ENCODE measurements at regions of chr17 and their contacts with region 1.

Region 1: GRCh38 chr17:13562271-13562800 is 39.4 kb downstream of the HS3ST3A1 start:
- DNase-seq: peak; percentile 81
- H3K4me3 ChIP-seq: peak overlapping the region; percentile 29; the same call in 1 of the 2 replicates
- CTCF ChIP-seq: no peak

Region 2: DNA sequence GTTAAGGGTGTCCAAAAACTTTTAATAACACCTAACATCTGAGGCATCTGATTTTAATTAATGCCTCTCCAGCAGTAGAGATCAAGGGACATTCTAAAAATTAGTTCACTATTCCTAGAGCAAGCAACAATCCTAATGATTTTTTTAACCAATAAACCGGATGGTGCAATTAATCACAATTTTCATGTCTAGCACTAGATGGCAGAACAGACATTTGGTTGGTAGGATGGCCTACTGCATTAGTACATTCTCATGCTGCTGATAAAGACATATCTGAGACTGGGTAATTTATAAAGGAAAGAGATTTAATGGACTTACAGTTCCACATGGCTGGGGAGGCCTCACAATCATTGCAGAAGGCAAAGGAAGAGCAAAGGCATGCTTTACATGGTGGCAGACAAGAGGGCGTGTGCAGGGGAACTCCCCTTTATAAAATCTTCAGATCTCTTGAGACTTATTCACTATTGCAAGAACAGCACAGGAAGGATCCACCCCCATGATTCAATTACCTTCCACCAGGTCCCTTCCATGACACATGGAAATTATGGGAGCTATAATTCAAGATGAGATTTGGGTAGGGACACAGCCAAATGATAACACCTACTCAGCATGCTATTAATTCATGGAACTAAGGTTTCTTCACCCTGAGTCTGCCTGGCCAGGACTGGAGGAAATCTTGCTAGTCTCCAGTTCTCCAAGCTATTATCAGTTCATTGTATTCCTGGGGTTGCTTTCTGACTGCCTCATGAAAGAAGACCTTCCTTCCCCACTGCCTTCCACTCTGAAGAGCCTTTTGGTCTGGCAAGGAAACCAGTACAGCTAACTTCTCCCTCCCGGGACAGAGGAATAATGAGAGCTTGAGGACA is 14.6 kb after region 1 on chr17:
- CTCF ChIA-PET with region 1: interaction called, 10 read pairs
- POLR2A ChIA-PET with region 1: interaction called, 4 read pairs
- DNase-seq: no peak
- H3K4me3 ChIP-seq: no peak overlapping the region
- CTCF ChIP-seq: no peak

Region 3: GRCh38 chr17:13650096-13650675 is 87.8 kb after region 1 on chr17:
- CTCF ChIA-PET with region 1: no interaction called
- POLR2A ChIA-PET with region 1: no interaction called
- DNase-seq: no peak
- H3K4me3 ChIP-seq: no peak overlapping the region
- CTCF ChIP-seq: no peak

Region 4: DNA sequence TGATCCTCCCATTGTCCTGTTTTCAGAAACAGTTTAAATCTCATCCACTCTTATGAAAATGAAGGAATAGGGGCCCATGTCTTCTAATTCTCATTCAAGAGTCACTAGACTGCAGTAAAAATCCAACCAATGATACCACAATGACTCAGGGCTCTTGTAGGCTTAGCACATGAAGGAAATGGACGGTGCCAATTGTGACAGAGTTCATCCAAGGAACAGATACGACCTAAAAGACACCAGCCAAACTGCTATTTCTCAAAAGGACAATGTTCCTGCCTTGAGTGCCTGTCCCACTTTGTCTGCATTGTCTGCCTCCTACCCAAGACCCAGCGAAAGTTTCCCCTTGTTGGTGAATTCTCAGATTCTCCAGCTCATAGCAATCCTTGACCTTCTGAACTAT is 302.2 kb after region 1 on chr17:
- CTCF ChIA-PET with region 1: no interaction called
- POLR2A ChIA-PET with region 1: no interaction called
- DNase-seq: peak; percentile 42
- H3K4me3 ChIP-seq: no peak overlapping the region
- CTCF ChIP-seq: no peak